ENCODE measurements at regions of chr1 and their contacts with region 1.

Region 1: GRCh38 chr1:145906954-145907753 is 2.7 kb downstream of the ITGA10 start:
- DNase-seq: no peak
- ATAC-seq: no peak

Region 2: GRCh38 chr1:145777357-145778145 is 129.6 kb before region 1 on chr1:
- intact Hi-C with region 1: no loop called
- DNase-seq: no peak
- ATAC-seq: peak; percentile 60

Region 3: GRCh38 chr1:145858894-145859490 is 48.2 kb before region 1 on chr1 and contains the start of gene PIAS3:
- intact Hi-C with region 1: loop called (anchors 5 kb)
- DNase-seq: peak; percentile 97
- ATAC-seq: peak; percentile 96
- total RNA-seq, gene PIAS3: 13.2 TPM

Region 4: GRCh38 chr1:146039846-146040199 is 132.7 kb after region 1 on chr1:
- intact Hi-C with region 1: no loop called
- DNase-seq: no peak
- ATAC-seq: no peak